Panc1 (cell line): ENCODE measurements at regions of chr19 and their contacts with region 1.

Region 1: GRCh38 chr19:2236314-2237050 is at the starts of genes PLEKHJ1 and SF3A2:
- DNase-seq: peak; percentile 86
- ATAC-seq: peak; percentile 78
- H3K4me3 ChIP-seq: peak within 1 kb of the TSS; percentile 75 to 83
- H3K27ac ChIP-seq: peak within 1 kb of the TSS; percentile 89
- H3K4me1 ChIP-seq: peaks cover 36% of the 10 kb centered on the region
- H3K27me3 ChIP-seq: no peaks in the 10 kb centered on the region
- CTCF ChIP-seq: peak; percentile 98
- total RNA-seq, gene PLEKHJ1: 78.6 TPM
- total RNA-seq, gene SF3A2: 103 TPM

Region 2: DNA sequence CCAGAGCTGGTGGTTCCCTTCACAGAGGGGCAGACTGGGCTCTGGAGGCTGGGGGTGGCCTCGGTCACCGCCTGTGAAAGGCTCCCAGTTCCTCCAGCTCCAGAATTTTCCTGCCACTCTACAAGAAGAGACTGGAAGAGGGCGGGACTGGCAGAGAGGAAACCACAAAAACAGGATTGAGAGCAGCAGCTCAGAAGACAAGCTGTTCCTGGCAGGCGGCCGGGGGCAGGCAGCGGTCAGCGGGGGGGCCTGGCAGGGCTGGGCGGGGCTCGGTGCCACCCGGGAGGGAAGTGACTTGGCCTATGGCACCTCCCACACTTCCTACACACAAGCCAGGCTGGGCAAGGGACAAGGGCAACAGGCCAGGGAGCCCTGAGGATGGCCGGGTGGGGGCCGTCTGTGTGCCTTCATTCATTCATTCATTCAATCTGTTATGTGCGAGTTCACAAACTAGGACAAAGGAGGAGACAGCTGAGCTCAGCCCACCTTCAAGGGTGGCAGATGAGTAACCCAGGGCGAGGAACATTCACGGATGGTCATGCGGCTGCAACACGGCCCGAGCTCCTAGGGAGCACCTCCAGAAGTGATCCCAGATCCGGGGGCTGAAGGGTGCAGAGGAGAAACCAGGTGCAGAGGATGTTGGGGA is 204.1 kb before region 1 on chr19:
- CTCF ChIA-PET with region 1: no interaction called
- POLR2A ChIA-PET with region 1: interaction called, 12 read pairs
- in situ Hi-C with region 1: no loop called
- intact Hi-C with region 1: no loop called
- DNase-seq: no peak
- ATAC-seq: peak; percentile 88
- H3K4me3 ChIP-seq: peak overlapping the region in 1 of 2 experiments; percentile 13; a peak in 1 of 4 replicates
- H3K27ac ChIP-seq: peak overlapping the region; percentile 63
- H3K4me1 ChIP-seq: peaks cover 10% of the 10 kb centered on the region
- H3K27me3 ChIP-seq: no peaks in the 10 kb centered on the region
- CTCF ChIP-seq: no peak

Region 3: DNA sequence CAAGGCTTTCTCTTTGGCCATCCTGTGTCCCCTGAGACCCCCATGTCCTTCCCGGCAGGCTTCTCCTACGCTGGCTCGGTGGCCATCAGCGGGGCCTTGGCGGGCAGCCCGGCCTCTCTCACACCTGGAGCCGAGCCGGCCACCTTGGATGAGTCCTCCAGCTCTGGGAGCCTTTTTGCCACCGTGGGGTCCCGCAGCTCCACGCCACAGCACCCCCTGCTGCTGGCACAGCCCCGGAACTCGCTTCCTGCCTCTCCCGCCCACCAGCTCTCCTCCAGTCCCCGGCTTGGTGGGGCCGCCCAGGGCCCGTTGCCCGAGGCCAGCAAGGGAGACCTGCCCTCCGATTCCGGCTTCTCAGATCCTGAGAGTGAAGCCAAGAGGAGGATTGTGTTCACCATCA is 14.6 kb before region 1 on chr19:
- CTCF ChIA-PET with region 1: no interaction called
- POLR2A ChIA-PET with region 1: no interaction called
- in situ Hi-C with region 1: no loop called
- intact Hi-C with region 1: no loop called
- DNase-seq: no peak
- ATAC-seq: peak; percentile 3; the same call in 1 of the 2 replicates
- H3K4me3 ChIP-seq: no peak overlapping the region
- H3K27ac ChIP-seq: no peak overlapping the region
- H3K4me1 ChIP-seq: 0 out of 2 replicates have a peak, but pooled peaks cover 3% of the 10 kb centered on the region
- H3K27me3 ChIP-seq: no peaks in the 10 kb centered on the region
- CTCF ChIP-seq: no peak; the same call in 1 of the 2 replicates

Region 4: DNA sequence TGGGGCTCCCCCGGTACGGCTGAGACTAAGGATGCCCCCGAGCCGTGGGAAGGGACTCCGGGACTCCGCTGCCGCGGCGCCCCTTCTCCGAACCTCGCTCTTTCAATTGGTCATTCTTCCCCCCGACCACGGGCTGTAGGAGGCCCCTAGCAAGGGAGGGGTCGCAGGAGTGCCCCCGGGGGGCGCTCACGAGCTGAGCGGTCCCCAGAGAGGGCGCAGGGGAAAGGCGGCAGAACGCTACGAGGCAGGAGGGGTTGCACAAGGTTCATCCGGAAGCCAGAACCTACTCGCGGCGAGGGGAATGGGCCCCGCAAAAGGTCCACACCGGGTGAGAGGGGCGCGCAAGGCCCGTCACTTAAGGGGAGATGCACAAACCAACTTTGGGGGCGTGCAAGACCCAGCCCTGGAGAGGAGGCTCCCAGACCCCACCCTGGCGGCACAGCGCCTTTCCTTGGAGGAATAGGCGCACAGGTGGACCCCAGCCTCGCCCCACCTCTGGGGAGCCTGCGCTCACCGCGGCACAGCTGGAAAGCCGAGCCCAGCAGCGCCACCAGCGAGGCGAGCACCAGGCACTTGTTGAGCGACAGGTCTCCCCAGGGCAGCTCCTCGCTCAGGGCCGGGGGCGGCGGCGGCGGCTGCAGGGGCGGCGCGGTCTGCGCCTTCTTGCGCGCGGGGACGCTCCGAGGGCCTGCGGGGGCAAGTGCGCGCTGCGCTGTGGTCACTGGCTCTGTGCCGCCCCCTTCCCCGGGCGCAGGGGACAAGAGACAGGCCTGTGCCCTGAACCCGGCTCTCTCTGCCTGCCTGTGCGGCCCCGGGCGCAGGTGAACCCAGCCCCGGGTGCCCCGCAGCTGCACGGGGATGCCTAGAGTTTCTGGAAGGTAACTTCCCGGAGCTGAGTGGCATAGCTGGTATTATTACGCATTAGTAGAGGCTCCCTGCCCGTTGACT is 16.9 kb after region 1 on chr19:
- CTCF ChIA-PET with region 1: no interaction called
- POLR2A ChIA-PET with region 1: no interaction called
- in situ Hi-C with region 1: no loop called
- intact Hi-C with region 1: no loop called
- DNase-seq: no peak
- ATAC-seq: no peak
- H3K4me3 ChIP-seq: no peak overlapping the region
- H3K27ac ChIP-seq: no peak overlapping the region
- H3K4me1 ChIP-seq: no peaks in the 10 kb centered on the region
- H3K27me3 ChIP-seq: no peaks in the 10 kb centered on the region
- CTCF ChIP-seq: no peak; the same call in 1 of the 2 replicates

Region 5: GRCh38 chr19:2273356-2274184 is 37.1 kb after region 1 on chr19:
- CTCF ChIA-PET with region 1: no interaction called
- POLR2A ChIA-PET with region 1: no interaction called
- in situ Hi-C with region 1: no loop called
- intact Hi-C with region 1: loop called (anchors 2 kb)
- DNase-seq: no peak
- ATAC-seq: peak; percentile 70
- H3K4me3 ChIP-seq: peak overlapping the region; percentile 71 to 89
- H3K27ac ChIP-seq: peak overlapping the region; percentile 72
- H3K4me1 ChIP-seq: peaks cover 6% of the 10 kb centered on the region
- H3K27me3 ChIP-seq: no peaks in the 10 kb centered on the region
- CTCF ChIP-seq: peak; percentile 95

Region 6: DNA sequence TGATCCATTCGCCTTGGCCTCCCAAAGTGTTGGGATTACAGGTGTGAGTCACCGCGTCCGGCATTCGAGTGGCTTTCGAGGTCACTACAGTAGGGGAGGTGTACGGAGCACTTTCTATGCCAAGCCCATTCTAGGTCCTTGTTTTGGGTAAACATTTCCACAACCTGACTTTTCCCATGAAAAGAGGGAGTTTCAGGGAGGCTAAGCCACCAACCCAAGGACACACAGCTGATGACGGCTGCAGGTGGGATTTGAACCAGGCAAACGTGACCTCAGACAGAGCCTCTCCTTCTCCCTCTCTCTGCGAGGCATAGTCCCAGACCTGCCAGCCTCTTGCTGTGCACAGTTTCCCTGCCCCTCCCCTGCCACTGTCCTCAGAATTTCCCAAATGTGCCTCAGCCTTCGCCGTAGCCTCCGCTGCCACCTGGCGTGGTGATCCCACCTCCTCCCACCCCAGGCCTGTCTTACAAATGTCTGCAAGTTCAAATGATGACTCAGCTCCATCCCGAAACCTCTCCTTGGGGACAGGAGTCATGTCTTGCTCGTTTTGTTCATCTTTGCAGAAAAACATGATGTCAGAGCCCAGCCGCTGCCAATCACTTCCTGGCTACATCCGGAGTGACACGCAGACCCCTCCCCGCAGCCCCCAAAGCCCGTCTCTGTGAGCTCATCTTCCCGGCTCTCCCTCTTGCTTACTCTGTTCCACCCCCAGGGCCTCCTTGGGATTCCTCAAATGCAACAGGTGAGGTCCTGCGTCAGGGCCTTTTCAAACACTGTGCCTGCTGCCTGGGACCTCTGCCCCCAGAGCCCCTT is 232.8 kb after region 1 on chr19:
- CTCF ChIA-PET with region 1: no interaction called
- POLR2A ChIA-PET with region 1: interaction called, 11 read pairs
- in situ Hi-C with region 1: no loop called
- intact Hi-C with region 1: no loop called
- DNase-seq: no peak
- ATAC-seq: peak; percentile 69
- H3K4me3 ChIP-seq: no peak overlapping the region
- H3K27ac ChIP-seq: peak overlapping the region; percentile 61
- H3K4me1 ChIP-seq: peaks cover 6% of the 10 kb centered on the region; the same call in 1 of the 2 replicates
- H3K27me3 ChIP-seq: no peaks in the 10 kb centered on the region
- CTCF ChIP-seq: no peak